ENCODE measurements at regions of chr17 and their contacts with region 1.

Region 1: DNA sequence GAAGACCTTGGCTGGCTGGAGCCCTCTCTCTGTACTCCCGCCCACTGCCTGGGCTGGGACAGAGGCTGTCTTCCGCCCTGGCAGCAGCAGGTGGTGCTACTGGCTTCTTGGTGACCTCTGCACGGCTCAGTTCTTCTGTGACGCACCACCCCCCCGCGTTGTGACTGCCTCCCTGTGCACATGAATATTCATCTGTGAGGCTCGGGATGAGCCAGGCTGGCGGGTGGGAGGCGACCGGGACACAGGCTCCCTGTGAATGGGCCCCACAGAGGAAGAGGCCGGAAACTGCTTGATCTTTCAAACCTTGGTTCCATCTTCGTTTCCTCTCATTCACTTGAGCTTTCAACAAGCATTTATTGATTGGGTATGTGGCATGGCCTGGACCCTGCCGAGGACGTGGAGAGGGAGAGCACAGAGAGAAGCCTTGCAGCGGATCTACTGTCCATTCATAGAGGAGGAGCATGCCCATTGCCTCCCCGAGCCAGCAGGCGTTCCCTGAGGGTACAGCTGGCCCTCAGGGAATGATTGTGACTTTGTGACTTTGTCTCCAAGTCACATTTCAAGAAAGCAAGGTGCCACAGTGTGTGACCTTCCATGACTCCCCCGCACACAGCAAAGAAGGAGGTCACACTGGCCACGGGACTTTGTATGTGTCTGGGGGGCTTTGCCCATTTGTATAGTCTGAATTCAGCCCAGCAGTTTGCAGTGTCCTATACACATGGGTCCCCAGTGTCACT is 45.0 kb downstream of the B9D1 start:
- DNase-seq: peak in 1 of 2 experiments; percentile 60
- ATAC-seq: peak; percentile 76 to 81
- H3K4me3 ChIP-seq: no peak overlapping the region
- H3K27ac ChIP-seq: no peak overlapping the region
- H3K4me1 ChIP-seq: 0 out of 3 replicates have a peak, but pooled peaks cover 5% of the 10 kb centered on the region
- CTCF ChIP-seq: peak; percentile 16; the same call in 1 of the 3 replicates
- EP300 ChIP-seq: no peak
- POLR2A ChIP-seq: no peak
- RAD21 ChIP-seq: peak; percentile 30 to 46; a peak in 3 of 5 replicates

Region 2: DNA sequence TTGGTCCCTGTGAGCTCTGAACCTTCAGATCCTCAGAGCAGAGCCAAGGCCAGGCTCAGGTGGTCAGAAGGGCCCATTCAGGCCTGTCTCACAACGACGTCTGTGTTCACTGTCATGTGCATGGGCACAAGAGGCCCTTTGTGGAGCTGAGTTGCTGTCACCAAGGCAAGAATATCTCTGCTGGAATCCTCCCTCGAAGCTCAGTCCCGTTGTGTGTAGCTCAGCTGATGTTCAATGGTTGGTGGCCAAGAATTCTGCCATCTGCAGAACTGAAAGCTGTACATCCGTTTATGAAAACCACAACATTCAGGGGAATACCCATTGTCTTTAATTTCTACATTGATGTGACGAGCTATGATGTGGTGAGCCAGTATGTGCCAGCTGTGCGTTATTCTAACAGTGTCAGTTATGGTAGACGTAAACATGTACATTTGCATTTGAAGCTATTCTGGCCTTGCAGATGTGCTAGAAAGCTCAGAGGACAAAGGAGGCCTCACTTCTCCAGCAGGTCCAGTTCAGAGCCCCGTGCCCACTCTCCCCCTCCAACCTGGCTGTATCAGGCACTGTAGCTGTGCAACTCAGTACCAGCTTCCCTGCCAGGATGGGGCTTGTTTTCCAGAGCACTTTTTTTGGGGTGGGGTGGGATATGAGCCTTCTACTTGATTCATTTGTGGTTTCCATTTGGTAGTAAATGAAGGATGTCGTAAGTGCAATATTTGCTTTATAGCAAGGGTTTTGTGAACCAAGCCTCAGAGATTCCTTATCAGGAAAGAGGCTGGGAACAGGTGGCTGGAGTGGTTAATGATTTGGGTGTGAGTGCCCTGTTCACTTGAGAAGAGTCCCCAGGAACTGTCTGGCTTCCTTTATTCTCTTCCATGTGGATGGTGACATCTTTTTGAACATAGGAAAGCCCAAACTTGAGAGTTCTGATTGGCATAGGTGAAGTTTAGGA is 11.1 kb before region 1 on chr17:
- CTCF ChIA-PET with region 1: interaction called, 62 read pairs
- POLR2A ChIA-PET with region 1: no interaction called
- DNase-seq: no peak
- ATAC-seq: no peak
- H3K4me3 ChIP-seq: no peak overlapping the region
- H3K27ac ChIP-seq: no peak overlapping the region
- H3K4me1 ChIP-seq: no peaks in the 10 kb centered on the region
- CTCF ChIP-seq: no peak
- EP300 ChIP-seq: no peak
- POLR2A ChIP-seq: no peak
- RAD21 ChIP-seq: no peak

Measured in A549 (cell line).